CD8-positive, alpha-beta T cell (primary cell): ENCODE measurements at regions of chr10 and their contacts with region 1.

Region 1: GRCh38 chr10:79195091-79195923 is 126.5 kb downstream of the ZMIZ1 start:
- DNase-seq: peak; percentile 56 to 87 (median 76)
- ATAC-seq: peak; percentile 91
- H3K4me3 ChIP-seq: no peak overlapping the region
- H3K4me3 Mint-ChIP-seq: no peak overlapping the region
- H3K27ac ChIP-seq: no peak overlapping the region
- H3K27ac Mint-ChIP-seq: no peak overlapping the region
- H3K4me1 ChIP-seq: peaks cover 4% of the 10 kb centered on the region
- H3K4me1 Mint-ChIP-seq: no peaks in the 10 kb centered on the region
- H3K27me3 ChIP-seq: no peaks in the 10 kb centered on the region
- H3K27me3 Mint-ChIP-seq: no peaks in the 10 kb centered on the region
- CTCF ChIP-seq: peak; percentile 93

Region 2: GRCh38 chr10:78042058-78042751 is 1153.1 kb before region 1 on chr10:
- CTCF ChIA-PET with region 1: interaction called, 204 read pairs
- POLR2A ChIA-PET with region 1: no interaction called
- intact Hi-C with region 1: loop called in 1 of 2 experiments (anchors 1 kb)
- DNase-seq: no peak
- ATAC-seq: no peak
- H3K4me3 ChIP-seq: no peak overlapping the region
- H3K4me3 Mint-ChIP-seq: no peak overlapping the region
- H3K27ac ChIP-seq: no peak overlapping the region
- H3K27ac Mint-ChIP-seq: peak overlapping the region; percentile 56
- H3K4me1 ChIP-seq: peaks cover 22% of the 10 kb centered on the region
- H3K4me1 Mint-ChIP-seq: peaks cover 47% of the 10 kb centered on the region
- H3K27me3 ChIP-seq: no peaks in the 10 kb centered on the region
- H3K27me3 Mint-ChIP-seq: no peaks in the 10 kb centered on the region
- CTCF ChIP-seq: no peak

Region 3: GRCh38 chr10:78255796-78256638 is 939.3 kb before region 1 on chr10:
- CTCF ChIA-PET with region 1: interaction called, 5 read pairs
- POLR2A ChIA-PET with region 1: no interaction called
- intact Hi-C with region 1: loop called (anchors 2 to 5 kb)
- DNase-seq: peak in 1 of 9 experiments; percentile 24
- ATAC-seq: no peak
- H3K4me3 ChIP-seq: no peak overlapping the region
- H3K4me3 Mint-ChIP-seq: no peak overlapping the region
- H3K27ac ChIP-seq: no peak overlapping the region
- H3K27ac Mint-ChIP-seq: no peak overlapping the region
- H3K4me1 ChIP-seq: no peaks in the 10 kb centered on the region
- H3K4me1 Mint-ChIP-seq: no peaks in the 10 kb centered on the region
- H3K27me3 ChIP-seq: no peaks in the 10 kb centered on the region
- H3K27me3 Mint-ChIP-seq: no peaks in the 10 kb centered on the region
- CTCF ChIP-seq: no peak

Region 4: GRCh38 chr10:78657163-78657861 is 538.0 kb before region 1 on chr10:
- CTCF ChIA-PET with region 1: interaction called, 21 read pairs
- POLR2A ChIA-PET with region 1: no interaction called
- intact Hi-C with region 1: loop called in 1 of 2 experiments (anchors 10 kb)
- DNase-seq: peak; percentile 24 to 70 (median 58)
- ATAC-seq: no peak
- H3K4me3 ChIP-seq: no peak overlapping the region
- H3K4me3 Mint-ChIP-seq: no peak overlapping the region
- H3K27ac ChIP-seq: no peak overlapping the region
- H3K27ac Mint-ChIP-seq: no peak overlapping the region
- H3K4me1 ChIP-seq: no peaks in the 10 kb centered on the region
- H3K4me1 Mint-ChIP-seq: no peaks in the 10 kb centered on the region
- H3K27me3 ChIP-seq: no peaks in the 10 kb centered on the region
- H3K27me3 Mint-ChIP-seq: peaks cover 16% of the 10 kb centered on the region
- CTCF ChIP-seq: peak; percentile 36

Region 5: GRCh38 chr10:78911533-78912340 is 283.6 kb before region 1 on chr10:
- CTCF ChIA-PET with region 1: no interaction called
- POLR2A ChIA-PET with region 1: no interaction called
- intact Hi-C with region 1: no loop called
- DNase-seq: no peak
- ATAC-seq: no peak
- H3K4me3 ChIP-seq: no peak overlapping the region
- H3K4me3 Mint-ChIP-seq: no peak overlapping the region
- H3K27ac ChIP-seq: no peak overlapping the region
- H3K27ac Mint-ChIP-seq: no peak overlapping the region
- H3K4me1 ChIP-seq: no peaks in the 10 kb centered on the region
- H3K4me1 Mint-ChIP-seq: no peaks in the 10 kb centered on the region
- H3K27me3 ChIP-seq: no peaks in the 10 kb centered on the region
- H3K27me3 Mint-ChIP-seq: no peaks in the 10 kb centered on the region
- CTCF ChIP-seq: no peak

Region 6: GRCh38 chr10:78931321-78932053 is 263.8 kb before region 1 on chr10:
- CTCF ChIA-PET with region 1: interaction called, 21 read pairs
- POLR2A ChIA-PET with region 1: no interaction called
- intact Hi-C with region 1: loop called in 1 of 2 experiments (anchors 5 kb)
- DNase-seq: no peak
- ATAC-seq: no peak
- H3K4me3 ChIP-seq: no peak overlapping the region
- H3K4me3 Mint-ChIP-seq: no peak overlapping the region
- H3K27ac ChIP-seq: no peak overlapping the region
- H3K27ac Mint-ChIP-seq: no peak overlapping the region
- H3K4me1 ChIP-seq: no peaks in the 10 kb centered on the region
- H3K4me1 Mint-ChIP-seq: no peaks in the 10 kb centered on the region
- H3K27me3 ChIP-seq: no peaks in the 10 kb centered on the region
- H3K27me3 Mint-ChIP-seq: no peaks in the 10 kb centered on the region
- CTCF ChIP-seq: no peak

Region 7: GRCh38 chr10:79155301-79156081 is 39.8 kb before region 1 on chr10:
- CTCF ChIA-PET with region 1: interaction called, 14 read pairs
- POLR2A ChIA-PET with region 1: no interaction called
- intact Hi-C with region 1: no loop called
- DNase-seq: no peak
- ATAC-seq: no peak
- H3K4me3 ChIP-seq: no peak overlapping the region
- H3K4me3 Mint-ChIP-seq: no peak overlapping the region
- H3K27ac ChIP-seq: no peak overlapping the region
- H3K27ac Mint-ChIP-seq: no peak overlapping the region
- H3K4me1 ChIP-seq: peaks cover 5% of the 10 kb centered on the region
- H3K4me1 Mint-ChIP-seq: peaks cover 5% of the 10 kb centered on the region
- H3K27me3 ChIP-seq: no peaks in the 10 kb centered on the region
- H3K27me3 Mint-ChIP-seq: no peaks in the 10 kb centered on the region
- CTCF ChIP-seq: no peak

Region 8: GRCh38 chr10:79229067-79229541 is 33.8 kb after region 1 on chr10:
- CTCF ChIA-PET with region 1: interaction called, 10 read pairs
- POLR2A ChIA-PET with region 1: no interaction called
- intact Hi-C with region 1: no loop called
- DNase-seq: no peak
- ATAC-seq: no peak
- H3K4me3 ChIP-seq: no peak overlapping the region
- H3K4me3 Mint-ChIP-seq: no peak overlapping the region
- H3K27ac ChIP-seq: no peak overlapping the region
- H3K27ac Mint-ChIP-seq: no peak overlapping the region
- H3K4me1 ChIP-seq: no peaks in the 10 kb centered on the region
- H3K4me1 Mint-ChIP-seq: no peaks in the 10 kb centered on the region
- H3K27me3 ChIP-seq: no peaks in the 10 kb centered on the region
- H3K27me3 Mint-ChIP-seq: no peaks in the 10 kb centered on the region
- CTCF ChIP-seq: no peak